B cell (primary cell): ENCODE measurements at regions of chr5 and their contacts with region 1.

Region 1: DNA sequence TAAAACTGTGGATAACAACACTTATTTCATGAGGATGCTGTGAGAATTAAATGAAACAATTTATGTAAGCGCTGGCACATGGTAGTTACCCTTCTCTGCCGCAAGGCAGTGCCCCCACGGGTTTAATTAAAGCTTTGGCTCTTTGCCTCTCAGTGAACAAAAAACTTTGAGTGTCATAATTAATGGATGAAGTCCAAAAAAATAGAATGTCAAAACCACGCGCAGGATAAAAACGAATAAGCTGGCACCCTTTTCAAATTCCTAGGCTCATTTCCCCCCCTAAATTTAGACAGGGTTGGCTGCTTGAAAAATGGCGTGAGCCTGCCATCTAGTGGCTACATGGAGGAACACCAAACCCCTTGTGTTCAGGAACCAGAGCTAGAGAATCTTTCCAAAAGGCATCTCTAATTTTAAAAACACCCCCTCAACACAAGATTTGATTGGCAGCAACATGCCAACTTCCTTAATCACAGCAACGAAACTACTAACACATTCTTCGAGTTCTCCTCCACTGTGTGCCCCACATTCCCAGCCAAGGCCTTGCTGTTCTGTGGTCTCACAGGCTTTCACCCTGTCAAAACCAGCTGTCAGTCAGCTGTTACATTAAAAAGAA is 29.0 kb upstream of the CCNG1 start:
- DNase-seq: peak; percentile 71
- ATAC-seq: peak; percentile 90
- H3K4me3 ChIP-seq: no peak overlapping the region
- H3K4me3 Mint-ChIP-seq: no peak overlapping the region
- H3K27ac ChIP-seq: no peak overlapping the region
- H3K27ac Mint-ChIP-seq: no peak overlapping the region
- H3K4me1 ChIP-seq: peaks cover 0 to 3% of the 10 kb centered on the region in 2 donors
- H3K4me1 Mint-ChIP-seq: peaks cover 2% of the 10 kb centered on the region
- H3K27me3 ChIP-seq: no peaks in the 10 kb centered on the region
- H3K27me3 Mint-ChIP-seq: peaks cover 16% of the 10 kb centered on the region
- CTCF ChIP-seq: peak; percentile 96

Region 2: GRCh38 chr5:161544350-161544765 is 1864.1 kb before region 1 on chr5:
- CTCF ChIA-PET with region 1: interaction called, 10 read pairs
- POLR2A ChIA-PET with region 1: no interaction called
- intact Hi-C with region 1: no loop called
- DNase-seq: no peak
- ATAC-seq: peak; percentile 43
- H3K4me3 ChIP-seq: no peak overlapping the region
- H3K4me3 Mint-ChIP-seq: no peak overlapping the region
- H3K27ac ChIP-seq: no peak overlapping the region
- H3K27ac Mint-ChIP-seq: no peak overlapping the region
- H3K4me1 ChIP-seq: peaks cover 16 to 22% of the 10 kb centered on the region in 2 donors
- H3K4me1 Mint-ChIP-seq: peaks cover 26% of the 10 kb centered on the region
- H3K27me3 ChIP-seq: peaks cover 0 to 37% (median 22%) of the 10 kb centered on the region in 4 experiments
- H3K27me3 Mint-ChIP-seq: peaks cover 42% of the 10 kb centered on the region
- CTCF ChIP-seq: peak; percentile 67

Region 3: GRCh38 chr5:163124207-163124606 is 284.2 kb before region 1 on chr5:
- CTCF ChIA-PET with region 1: no interaction called
- POLR2A ChIA-PET with region 1: no interaction called
- intact Hi-C with region 1: no loop called
- DNase-seq: no peak
- ATAC-seq: no peak
- H3K4me3 ChIP-seq: no peak overlapping the region
- H3K4me3 Mint-ChIP-seq: no peak overlapping the region
- H3K27ac ChIP-seq: no peak overlapping the region
- H3K27ac Mint-ChIP-seq: no peak overlapping the region
- H3K4me1 ChIP-seq: no peaks in the 10 kb centered on the region
- H3K4me1 Mint-ChIP-seq: no peaks in the 10 kb centered on the region
- H3K27me3 ChIP-seq: no peaks in the 10 kb centered on the region
- H3K27me3 Mint-ChIP-seq: no peaks in the 10 kb centered on the region
- CTCF ChIP-seq: no peak

Region 4: GRCh38 chr5:163306421-163306820 is 102.0 kb before region 1 on chr5:
- CTCF ChIA-PET with region 1: interaction called, 10 read pairs
- POLR2A ChIA-PET with region 1: no interaction called
- intact Hi-C with region 1: loop called (anchors 2 kb)
- DNase-seq: peak; percentile 4
- ATAC-seq: no peak
- H3K4me3 ChIP-seq: no peak overlapping the region
- H3K4me3 Mint-ChIP-seq: no peak overlapping the region
- H3K27ac ChIP-seq: no peak overlapping the region
- H3K27ac Mint-ChIP-seq: no peak overlapping the region
- H3K4me1 ChIP-seq: no peaks in the 10 kb centered on the region
- H3K4me1 Mint-ChIP-seq: no peaks in the 10 kb centered on the region
- H3K27me3 ChIP-seq: no peaks in the 10 kb centered on the region
- H3K27me3 Mint-ChIP-seq: peaks cover 12% of the 10 kb centered on the region
- CTCF ChIP-seq: peak; percentile 17

Region 5: GRCh38 chr5:163397354-163397753 is 11.1 kb before region 1 on chr5:
- CTCF ChIA-PET with region 1: interaction called, 22 read pairs
- POLR2A ChIA-PET with region 1: no interaction called
- intact Hi-C with region 1: no loop called
- DNase-seq: no peak
- ATAC-seq: no peak
- H3K4me3 ChIP-seq: no peak overlapping the region
- H3K4me3 Mint-ChIP-seq: no peak overlapping the region
- H3K27ac ChIP-seq: no peak overlapping the region
- H3K27ac Mint-ChIP-seq: no peak overlapping the region
- H3K4me1 ChIP-seq: no peaks in the 10 kb centered on the region
- H3K4me1 Mint-ChIP-seq: no peaks in the 10 kb centered on the region
- H3K27me3 ChIP-seq: peaks cover 0 to 3% (median 0%) of the 10 kb centered on the region in 4 experiments
- H3K27me3 Mint-ChIP-seq: peaks cover 32% of the 10 kb centered on the region
- CTCF ChIP-seq: no peak

Region 6: GRCh38 chr5:163658702-163659567 is 250.5 kb after region 1 on chr5:
- CTCF ChIA-PET with region 1: no interaction called
- POLR2A ChIA-PET with region 1: no interaction called
- intact Hi-C with region 1: no loop called
- DNase-seq: no peak
- ATAC-seq: no peak
- H3K4me3 ChIP-seq: no peak overlapping the region
- H3K4me3 Mint-ChIP-seq: no peak overlapping the region
- H3K27ac ChIP-seq: no peak overlapping the region
- H3K27ac Mint-ChIP-seq: no peak overlapping the region
- H3K4me1 ChIP-seq: no peaks in the 10 kb centered on the region
- H3K4me1 Mint-ChIP-seq: no peaks in the 10 kb centered on the region
- H3K27me3 ChIP-seq: no peaks in the 10 kb centered on the region
- H3K27me3 Mint-ChIP-seq: peaks cover 8% of the 10 kb centered on the region
- CTCF ChIP-seq: no peak